GM10248 (cell line): ENCODE measurements at regions of chr20 and their contacts with region 1.

Region 1: DNA sequence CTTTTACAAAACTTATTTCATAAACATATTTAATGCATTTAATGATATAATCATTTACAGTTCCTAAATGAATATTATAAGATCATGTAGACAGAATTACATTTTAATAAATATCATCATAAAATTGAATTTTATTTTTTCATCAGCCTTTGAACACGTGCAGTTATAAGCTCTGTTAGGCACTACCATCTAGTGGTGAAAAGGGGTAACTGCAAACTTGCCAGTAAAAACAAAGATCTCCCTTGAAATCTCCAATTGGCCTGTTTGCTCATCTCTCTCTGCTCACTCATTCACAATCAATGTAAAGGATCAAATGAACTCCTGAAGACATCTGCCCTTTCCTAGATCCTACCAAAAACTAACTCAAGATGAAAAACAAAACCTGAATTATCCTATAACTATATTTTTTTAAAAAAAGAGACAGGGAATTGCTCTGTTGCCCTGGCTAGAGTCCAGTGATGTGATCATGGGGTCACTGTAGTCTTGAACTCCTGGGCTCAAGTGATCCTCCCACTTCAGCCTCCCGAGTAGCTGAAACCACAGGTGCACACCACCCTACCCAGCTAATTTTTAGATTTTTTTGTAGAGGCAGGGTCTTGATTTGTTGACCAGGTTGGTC is 31.7 kb downstream of the SAMHD1 start:
- DNase-seq: peak; percentile 71
- CTCF ChIP-seq: peak; percentile 83

Region 2: GRCh38 chr20:36908603-36909002 is 11.2 kb before region 1 on chr20:
- CTCF ChIA-PET with region 1: interaction called, 34 read pairs
- POLR2A ChIA-PET with region 1: no interaction called
- DNase-seq: no peak
- CTCF ChIP-seq: no peak

Region 3: GRCh38 chr20:36932476-36933426 is 12.9 kb after region 1 on chr20:
- CTCF ChIA-PET with region 1: interaction called, 18 read pairs
- POLR2A ChIA-PET with region 1: no interaction called
- DNase-seq: no peak
- CTCF ChIP-seq: no peak

Region 4: DNA sequence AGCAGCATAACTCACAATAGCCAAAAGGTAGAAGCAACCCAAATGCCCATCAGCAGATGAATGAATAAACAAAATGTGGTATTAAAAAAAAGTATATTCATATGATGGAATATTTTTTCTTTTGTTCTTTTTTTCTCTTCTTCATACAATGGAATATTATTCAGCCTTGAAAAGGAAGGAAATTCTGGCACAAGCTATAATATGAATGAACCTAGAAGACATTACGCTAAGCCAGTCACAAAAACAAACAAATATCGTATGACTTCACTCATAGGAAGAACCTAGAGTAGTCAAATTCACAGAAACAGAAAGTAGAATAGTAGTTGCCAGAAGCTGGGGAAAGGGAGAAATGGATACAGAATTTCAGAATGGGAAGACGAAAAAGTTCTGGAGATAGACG is 112.3 kb after region 1 on chr20:
- CTCF ChIA-PET with region 1: no interaction called
- POLR2A ChIA-PET with region 1: no interaction called
- DNase-seq: no peak
- CTCF ChIP-seq: no peak